Mammary epithelial cell (primary cell): ENCODE measurements at regions of chr15 and their contacts with region 1.

Region 1: GRCh38 chr15:65020419-65020818 is 9.0 kb downstream of the MTFMT start:
- DNase-seq: no peak
- H3K4me3 ChIP-seq: no peak overlapping the region
- H3K27ac ChIP-seq: no peak overlapping the region
- H3K4me1 ChIP-seq: peaks cover 7% of the 10 kb centered on the region
- H3K27me3 ChIP-seq: no peaks in the 10 kb centered on the region
- CTCF ChIP-seq: no peak

Region 2: GRCh38 chr15:64622410-64623260 is 397.8 kb before region 1 on chr15:
- CTCF ChIA-PET with region 1: no interaction called
- dilution Hi-C with region 1: no loop called
- in situ Hi-C with region 1: no loop called
- intact Hi-C with region 1: no loop called
- DNase-seq: no peak
- H3K4me3 ChIP-seq: no peak overlapping the region
- H3K27ac ChIP-seq: no peak overlapping the region
- H3K4me1 ChIP-seq: peaks cover 18% of the 10 kb centered on the region
- H3K27me3 ChIP-seq: no peaks in the 10 kb centered on the region
- CTCF ChIP-seq: no peak

Region 3: DNA sequence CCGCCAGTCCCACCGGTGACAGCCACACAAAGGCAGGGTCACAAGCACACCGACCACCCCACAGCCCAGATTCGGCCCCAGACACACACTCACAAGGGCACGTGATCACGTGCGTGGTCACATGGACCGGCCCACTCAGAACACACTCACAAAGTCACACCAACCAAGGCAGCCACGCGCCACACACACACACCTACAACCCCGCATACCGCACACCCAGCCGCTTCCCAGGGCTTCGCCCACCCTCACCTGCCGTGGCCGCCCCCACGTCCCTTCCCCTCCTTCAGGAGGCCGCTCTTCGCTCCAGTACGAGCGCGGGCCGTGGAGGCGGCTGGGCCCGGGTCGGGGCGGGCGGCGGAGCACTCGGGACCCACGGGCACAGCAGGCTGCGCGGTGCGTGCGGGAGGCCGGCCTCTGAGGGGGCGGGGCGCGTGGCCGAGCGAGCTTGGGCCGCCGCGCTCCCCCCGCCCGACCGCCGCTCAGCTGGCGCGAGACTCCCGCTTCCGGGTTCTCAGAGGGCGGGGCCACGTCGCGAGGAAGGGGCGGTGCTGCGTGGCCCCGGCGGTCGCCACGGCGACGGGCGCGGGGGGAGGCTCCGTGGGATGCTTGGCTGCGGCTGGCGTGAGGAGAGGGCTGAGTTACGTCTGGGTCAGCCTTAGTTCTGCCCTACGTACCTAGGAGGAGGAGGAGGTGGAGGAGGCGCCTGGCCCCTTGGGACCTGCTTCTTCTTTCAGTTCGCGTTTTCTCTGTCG is 30.8 kb before region 1 on chr15 and contains the start of gene SPG21:
- CTCF ChIA-PET with region 1: no interaction called
- dilution Hi-C with region 1: loop called (anchors 5 kb)
- in situ Hi-C with region 1: no loop called
- intact Hi-C with region 1: no loop called
- DNase-seq: peak; percentile 87
- H3K4me3 ChIP-seq: peak within 1 kb of the TSS; percentile 91 to 99 (median 98)
- H3K27ac ChIP-seq: peak within 1 kb of the TSS; percentile 93
- H3K4me1 ChIP-seq: peaks cover 13% of the 10 kb centered on the region
- H3K27me3 ChIP-seq: no peaks in the 10 kb centered on the region
- CTCF ChIP-seq: no peak
- total RNA-seq, gene SPG21: 59.1 to 71.7 TPM

Region 4: DNA sequence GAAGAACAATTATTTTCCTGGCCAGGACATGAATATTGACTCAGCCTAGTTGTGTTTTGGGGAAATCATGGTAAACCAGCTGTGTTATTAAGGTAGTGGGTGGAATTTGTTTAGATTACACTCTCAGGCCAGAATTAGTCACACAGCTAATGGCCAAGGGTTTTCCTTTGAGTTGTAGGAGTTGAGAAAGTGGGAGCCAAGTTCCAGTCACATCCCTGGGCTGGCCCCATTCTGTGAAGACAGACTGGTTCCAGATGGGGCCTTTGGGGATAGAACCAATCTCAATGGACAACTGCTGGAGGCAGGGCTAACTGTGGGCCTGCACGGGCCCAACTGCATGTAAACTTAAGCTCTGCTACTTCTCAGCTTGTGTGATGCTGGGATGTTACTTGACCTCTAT is 48.8 kb after region 1 on chr15:
- CTCF ChIA-PET with region 1: no interaction called
- dilution Hi-C with region 1: no loop called
- in situ Hi-C with region 1: no loop called
- intact Hi-C with region 1: no loop called
- DNase-seq: no peak
- H3K4me3 ChIP-seq: no peak overlapping the region
- H3K27ac ChIP-seq: no peak overlapping the region
- H3K4me1 ChIP-seq: peaks cover 8% of the 10 kb centered on the region
- H3K27me3 ChIP-seq: peaks cover 13% of the 10 kb centered on the region
- CTCF ChIP-seq: no peak